Activated CD4-positive, alpha-beta T cell treated with anti-CD3 and anti-CD28 coated beads for 36 hours (primary cell): ENCODE measurements at regions of chrX and their contacts with region 1.

Region 1: DNA sequence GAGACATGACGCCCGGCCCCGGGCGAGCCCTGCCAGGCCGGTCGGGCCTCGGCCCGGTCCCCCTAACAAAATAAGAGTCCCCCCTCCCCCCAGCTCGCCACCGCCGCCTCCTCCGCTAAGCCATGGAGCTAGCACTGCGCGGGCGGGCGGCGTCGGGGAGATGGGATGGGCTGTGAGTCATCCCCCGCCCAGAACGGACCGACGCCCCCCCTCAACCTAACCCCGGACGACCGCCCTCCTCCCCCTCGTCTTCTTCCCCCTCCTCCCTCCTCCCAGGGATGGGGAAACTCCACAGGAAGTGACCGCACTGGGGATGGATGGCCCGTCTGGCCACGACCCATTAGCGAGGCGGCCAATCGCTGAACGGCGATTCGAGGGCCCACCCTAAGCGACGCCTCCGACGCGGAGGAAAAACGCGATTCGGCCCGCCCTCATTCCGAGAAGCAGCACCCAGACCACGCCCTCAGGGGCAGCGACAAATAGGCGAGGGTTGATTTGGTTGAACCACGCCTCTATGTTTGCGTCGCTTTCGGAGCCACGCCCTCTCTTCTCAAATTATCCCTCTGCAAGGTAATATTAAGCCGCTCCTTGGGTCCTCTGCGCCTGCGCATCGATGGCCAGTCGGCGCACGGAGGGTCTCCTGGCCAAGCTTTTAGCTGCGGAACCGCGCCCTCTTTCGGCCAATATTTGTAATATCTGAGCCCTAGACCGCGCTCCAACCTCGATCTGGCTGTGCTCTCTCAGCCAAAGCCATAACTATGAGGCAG is at the start of gene TFE3:
- DNase-seq: peak; percentile 97
- ATAC-seq: peak; percentile 91
- H3K4me3 Mint-ChIP-seq: peak within 1 kb of the TSS; percentile 93
- H3K27ac Mint-ChIP-seq: peak within 1 kb of the TSS; percentile 94
- H3K4me1 Mint-ChIP-seq: peaks cover 41% of the 10 kb centered on the region
- H3K27me3 Mint-ChIP-seq: no peaks in the 10 kb centered on the region
- total RNA-seq, gene TFE3: 27.1 to 27.5 TPM

Region 2: DNA sequence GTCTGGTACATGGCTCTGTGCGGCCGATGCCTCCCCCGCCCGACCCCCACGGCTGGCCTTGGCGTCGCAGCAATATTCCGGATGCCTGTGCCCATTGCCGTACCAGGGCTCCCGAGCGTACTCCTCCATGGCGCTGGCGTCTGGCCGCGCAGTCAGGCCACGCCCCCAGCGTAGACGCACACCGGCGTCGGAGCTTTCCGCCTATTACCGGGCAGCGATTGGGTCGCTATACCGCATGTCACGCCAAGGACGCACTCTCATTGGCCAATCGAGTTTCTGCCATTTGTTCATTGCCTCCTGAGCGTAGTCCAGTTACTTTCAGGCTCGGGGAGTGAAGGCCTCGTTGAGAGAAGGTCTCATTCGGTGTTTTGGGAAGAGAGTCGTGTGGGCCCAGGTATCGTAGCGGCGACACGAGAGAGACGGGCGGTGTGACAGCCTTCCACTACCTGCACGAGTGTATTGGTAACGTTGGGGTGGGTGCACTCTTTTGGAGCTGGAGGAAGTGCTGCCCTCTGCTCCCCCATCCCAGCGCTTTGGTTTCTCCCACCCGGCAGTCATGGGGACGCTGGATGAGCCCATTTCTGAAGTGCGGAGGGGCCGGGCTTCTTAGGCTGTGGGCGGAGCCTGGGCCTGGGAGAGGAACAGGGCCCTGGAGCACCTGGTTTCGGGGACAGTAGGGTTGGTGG is 145.6 kb before region 1 on chrX and contains the starts of genes PQBP1 and TIMM17B:
- CTCF ChIA-PET with region 1: no interaction called
- POLR2A ChIA-PET with region 1: no interaction called
- intact Hi-C with region 1: loop called in 1 of 2 experiments (anchors 1 kb)
- DNase-seq: peak; percentile 92
- ATAC-seq: peak; percentile 94
- H3K4me3 Mint-ChIP-seq: peak within 1 kb of the TSS; percentile 81
- H3K27ac Mint-ChIP-seq: peak within 1 kb of the TSS; percentile 94
- H3K4me1 Mint-ChIP-seq: peaks cover 19% of the 10 kb centered on the region
- H3K27me3 Mint-ChIP-seq: no peaks in the 10 kb centered on the region
- total RNA-seq, gene PQBP1: 73.4 to 75.3 TPM
- total RNA-seq, gene TIMM17B: 54.2 to 58.9 TPM

Region 3: DNA sequence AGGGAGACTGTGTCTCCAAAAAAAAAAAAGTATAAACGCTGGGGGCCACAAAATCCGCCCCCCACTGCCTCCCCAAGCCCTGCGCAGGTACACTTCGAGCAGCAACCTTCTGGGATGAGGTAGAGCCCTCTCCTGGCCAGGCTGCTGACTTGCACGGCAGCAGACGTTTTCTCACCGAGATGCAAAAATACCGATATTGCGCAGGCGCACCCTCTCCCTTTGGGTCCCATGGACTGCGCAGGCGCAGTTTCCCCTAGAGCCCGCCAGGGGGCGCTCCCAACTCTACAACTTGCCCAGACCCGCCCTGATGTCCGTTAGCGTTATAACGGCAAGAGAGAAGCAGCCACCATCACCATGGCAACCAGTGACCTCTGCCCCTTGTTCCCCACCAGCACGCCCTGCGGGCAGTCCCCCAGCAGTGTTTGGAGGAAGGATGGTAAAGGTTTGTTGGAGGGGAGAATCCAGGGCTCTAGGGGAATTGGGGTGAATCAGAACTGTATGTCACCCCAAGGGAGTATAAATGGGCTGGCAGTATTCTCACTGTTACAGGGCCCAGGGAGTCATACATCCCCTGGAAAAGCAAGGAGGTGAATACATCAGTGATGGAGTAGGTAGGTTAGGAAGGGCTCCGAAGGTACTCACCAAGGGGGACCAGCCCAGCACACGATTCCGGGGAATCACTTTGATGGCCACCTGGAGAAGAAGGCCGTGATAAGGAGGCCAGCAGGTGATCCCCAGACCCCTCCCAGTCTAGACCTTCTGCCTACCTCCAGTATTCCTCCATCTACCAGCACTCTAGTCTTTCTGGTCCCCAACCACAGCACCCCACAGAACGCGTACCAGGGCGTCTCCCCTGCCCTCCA is 126.0 kb before region 1 on chrX:
- CTCF ChIA-PET with region 1: no interaction called
- POLR2A ChIA-PET with region 1: no interaction called
- intact Hi-C with region 1: loop called in 1 of 2 experiments (anchors 1 kb)
- DNase-seq: peak; percentile 92
- ATAC-seq: peak; percentile 34
- H3K4me3 Mint-ChIP-seq: peak overlapping the region; percentile 97
- H3K27ac Mint-ChIP-seq: peak overlapping the region; percentile 95
- H3K4me1 Mint-ChIP-seq: peaks cover 51% of the 10 kb centered on the region
- H3K27me3 Mint-ChIP-seq: no peaks in the 10 kb centered on the region

Region 4: DNA sequence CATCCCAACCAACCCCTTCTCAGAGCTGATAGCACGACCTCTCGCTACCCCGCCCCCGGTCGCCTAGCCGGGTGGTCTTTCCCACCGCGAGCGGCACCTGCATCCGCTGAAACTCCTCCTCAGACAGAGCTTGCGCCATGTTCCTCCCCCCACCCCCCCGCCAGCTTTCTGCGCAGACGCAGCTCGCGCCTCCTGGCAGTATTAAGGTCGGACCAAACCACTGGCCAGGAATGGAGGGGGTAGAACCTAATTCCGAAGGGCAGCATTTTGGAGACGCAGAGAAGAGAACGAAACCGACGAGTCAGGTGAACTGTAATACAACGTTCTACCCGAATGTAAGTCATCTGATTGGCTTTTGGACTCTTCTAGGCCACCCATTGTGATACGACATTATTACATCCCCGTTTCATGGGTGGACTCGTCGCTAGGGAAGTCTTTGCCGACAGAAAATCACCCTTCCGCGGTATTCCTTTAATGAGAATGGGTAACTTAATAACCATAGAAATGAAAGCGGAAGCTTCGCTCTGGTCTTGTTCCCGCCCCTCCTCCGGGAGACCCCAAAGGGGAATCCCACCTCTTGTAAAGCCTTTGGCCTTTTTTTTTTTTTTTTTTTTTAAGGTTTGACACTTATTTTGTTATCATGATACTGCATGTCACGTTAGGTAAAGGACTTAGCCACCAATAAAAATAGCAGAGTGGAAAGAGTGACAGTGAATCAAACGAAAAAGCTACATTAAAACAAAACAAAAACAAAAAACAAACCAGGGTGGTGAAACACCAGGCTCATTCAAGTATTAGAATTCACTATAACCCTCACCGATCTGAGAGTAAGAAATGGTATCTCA is 41.1 kb before region 1 on chrX and contains the start of gene GRIPAP1:
- CTCF ChIA-PET with region 1: interaction called, 5 read pairs
- POLR2A ChIA-PET with region 1: no interaction called
- intact Hi-C with region 1: loop called (anchors 1 kb)
- DNase-seq: peak; percentile 87
- ATAC-seq: peak; percentile 82
- H3K4me3 Mint-ChIP-seq: peak within 1 kb of the TSS; percentile 97
- H3K27ac Mint-ChIP-seq: peak within 1 kb of the TSS; percentile 98
- H3K4me1 Mint-ChIP-seq: peaks cover 34% of the 10 kb centered on the region
- H3K27me3 Mint-ChIP-seq: no peaks in the 10 kb centered on the region
- total RNA-seq, gene GRIPAP1: 57.8 to 63.3 TPM

Region 5: DNA sequence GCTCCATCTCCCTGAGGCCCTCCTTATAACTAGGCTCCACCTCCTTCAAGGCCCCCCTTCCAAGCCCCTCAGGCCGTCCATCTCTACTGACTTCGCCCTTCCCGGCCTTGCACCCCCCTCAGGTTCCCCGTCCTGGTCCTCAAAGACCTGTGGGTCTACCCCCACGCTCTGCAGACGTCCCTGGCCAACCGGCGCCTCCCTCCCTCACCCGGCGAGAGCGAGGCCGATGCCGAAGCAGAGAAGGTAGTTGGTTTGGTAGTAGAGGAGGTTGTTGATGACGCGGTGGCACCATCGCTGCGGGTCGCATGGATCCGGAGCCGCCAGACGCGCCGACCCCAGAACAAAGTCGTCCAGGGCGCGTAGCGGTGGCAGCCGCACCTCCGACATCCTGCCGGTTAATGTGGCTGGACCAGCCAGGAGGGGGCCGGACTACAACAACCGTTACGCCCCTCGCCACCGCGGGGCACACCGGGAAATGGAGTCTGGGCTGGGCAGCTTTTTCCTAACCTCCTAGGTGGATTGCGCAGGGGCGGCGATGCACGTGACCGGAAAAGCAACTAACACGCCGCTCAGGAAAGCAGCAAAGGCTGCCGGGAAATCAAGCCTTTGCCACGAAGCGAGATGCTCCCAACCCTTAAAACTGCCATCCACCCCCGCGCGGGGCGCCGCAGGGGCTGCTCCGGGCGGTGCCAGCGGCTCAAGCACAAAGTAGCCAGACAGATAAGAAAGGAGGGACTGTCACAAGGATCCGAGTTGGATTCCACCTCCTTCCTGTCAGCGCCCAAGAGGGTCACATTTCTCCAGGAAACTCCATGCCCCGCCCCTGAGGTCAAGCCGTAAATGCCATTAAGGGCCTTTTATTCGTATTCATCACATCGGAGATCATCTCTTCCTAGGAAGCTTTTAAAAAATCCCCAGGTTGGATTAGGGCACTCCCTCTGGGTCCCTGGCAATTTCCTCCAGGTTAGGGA is 30.5 kb after region 1 on chrX and contains the start of gene PRAF2:
- CTCF ChIA-PET with region 1: no interaction called
- POLR2A ChIA-PET with region 1: no interaction called
- intact Hi-C with region 1: loop called in 1 of 2 experiments (anchors 1 kb)
- DNase-seq: peak; percentile 94
- ATAC-seq: peak; percentile 98
- H3K4me3 Mint-ChIP-seq: peak within 1 kb of the TSS; percentile 78
- H3K27ac Mint-ChIP-seq: peak within 1 kb of the TSS; percentile 73
- H3K4me1 Mint-ChIP-seq: peaks cover 19% of the 10 kb centered on the region
- H3K27me3 Mint-ChIP-seq: no peaks in the 10 kb centered on the region
- total RNA-seq, gene PRAF2: 9.1 to 11.5 TPM